ENCODE measurements at regions of chr1 and their contacts with region 1.

Region 1: DNA sequence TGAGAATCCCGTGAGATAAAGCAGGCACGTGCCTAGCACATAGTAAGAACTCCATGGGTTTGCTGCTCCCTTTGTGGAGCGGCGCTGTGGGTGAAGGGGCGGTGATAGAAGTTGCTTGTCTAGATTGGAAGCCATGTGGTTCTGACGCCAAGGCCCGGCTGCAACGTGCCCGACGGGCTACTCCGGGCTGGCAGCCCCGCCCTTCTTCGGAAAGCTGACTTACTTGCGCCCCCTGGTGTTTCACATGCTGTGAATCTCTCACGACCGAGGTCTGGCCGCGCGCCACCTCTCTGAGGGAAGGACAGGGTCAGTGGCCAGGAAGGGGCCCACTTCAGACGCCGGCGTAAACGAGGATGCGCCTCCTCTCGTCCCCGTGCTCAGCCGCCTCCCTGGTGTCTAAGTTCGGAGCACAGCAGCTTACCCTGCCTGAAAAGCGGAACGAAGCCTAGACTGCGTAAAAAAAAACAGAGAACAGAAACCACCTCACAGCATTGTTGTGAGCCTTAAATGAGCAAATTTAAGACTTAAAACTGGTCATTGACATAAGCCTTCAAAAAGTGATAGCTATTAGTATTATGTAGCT is 42.6 kb upstream of the WNT2B start:
- DNase-seq: peak; percentile 91 to 97 (median 94)
- H3K4me3 ChIP-seq: peak overlapping the region; percentile 31 to 75 (median 58)
- H3K27ac ChIP-seq: peak overlapping the region; percentile 3 to 93 (median 78)
- H3K27me3 ChIP-seq: no peaks in the 10 kb centered on the region
- CTCF ChIP-seq: peak; percentile 66 to 97 (median 93)

Region 2: GRCh38 chr1:112390775-112391602 is 75.2 kb before region 1 on chr1:
- intact Hi-C with region 1: loop called (anchors 1 kb)
- DNase-seq: peak; percentile 67 to 93 (median 88)
- H3K4me3 ChIP-seq: peak overlapping the region; percentile 24 to 70 (median 53)
- H3K27ac ChIP-seq: peak overlapping the region in 57 of 59 donors; percentile 7 to 93 (median 75)
- H3K27me3 ChIP-seq: no peaks in the 10 kb centered on the region
- CTCF ChIP-seq: peak; percentile 69 to 99 (median 94)

Region 3: GRCh38 chr1:112395821-112396652 is 70.1 kb before region 1 on chr1 and contains the start of gene CTTNBP2NL:
- intact Hi-C with region 1: loop called in 1 of 2 experiments (anchors 1 kb)
- DNase-seq: peak; percentile 92 to 98 (median 98)
- H3K4me3 ChIP-seq: peak within 1 kb of the TSS; percentile 72 to 100 (median 95)
- H3K27ac ChIP-seq: peak within 1 kb of the TSS; percentile 3 to 98 (median 88)
- H3K27me3 ChIP-seq: no peaks in the 10 kb centered on the region
- CTCF ChIP-seq: peak in 36 of 56 donors; percentile 9 to 61 (median 32)
- total RNA-seq, gene CTTNBP2NL: 24.0 to 48.1 (median 32.7) TPM

Region 4: DNA sequence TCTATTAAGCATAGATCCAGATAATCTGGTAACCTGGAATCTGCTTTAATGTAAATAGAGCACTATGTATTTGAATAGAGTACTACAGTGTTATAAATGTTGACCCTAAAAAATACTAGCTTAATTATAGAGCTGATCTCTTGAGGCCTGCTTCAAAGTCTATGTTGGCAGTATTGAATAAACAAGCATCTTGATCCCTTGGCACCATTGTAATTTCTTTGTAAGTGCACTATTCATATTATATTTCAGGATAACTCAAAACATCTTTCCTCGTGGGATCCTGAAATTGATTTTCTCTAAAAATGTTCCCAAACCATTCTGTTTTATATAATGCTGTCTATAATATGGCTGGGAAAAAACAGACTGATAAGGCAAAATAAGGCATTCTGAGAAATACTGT is 59.4 kb before region 1 on chr1:
- intact Hi-C with region 1: no loop called
- DNase-seq: no peak
- H3K4me3 ChIP-seq: no peak overlapping the region
- H3K27ac ChIP-seq: no peak overlapping the region
- H3K27me3 ChIP-seq: no peaks in the 10 kb centered on the region
- CTCF ChIP-seq: no peak

Region 5: DNA sequence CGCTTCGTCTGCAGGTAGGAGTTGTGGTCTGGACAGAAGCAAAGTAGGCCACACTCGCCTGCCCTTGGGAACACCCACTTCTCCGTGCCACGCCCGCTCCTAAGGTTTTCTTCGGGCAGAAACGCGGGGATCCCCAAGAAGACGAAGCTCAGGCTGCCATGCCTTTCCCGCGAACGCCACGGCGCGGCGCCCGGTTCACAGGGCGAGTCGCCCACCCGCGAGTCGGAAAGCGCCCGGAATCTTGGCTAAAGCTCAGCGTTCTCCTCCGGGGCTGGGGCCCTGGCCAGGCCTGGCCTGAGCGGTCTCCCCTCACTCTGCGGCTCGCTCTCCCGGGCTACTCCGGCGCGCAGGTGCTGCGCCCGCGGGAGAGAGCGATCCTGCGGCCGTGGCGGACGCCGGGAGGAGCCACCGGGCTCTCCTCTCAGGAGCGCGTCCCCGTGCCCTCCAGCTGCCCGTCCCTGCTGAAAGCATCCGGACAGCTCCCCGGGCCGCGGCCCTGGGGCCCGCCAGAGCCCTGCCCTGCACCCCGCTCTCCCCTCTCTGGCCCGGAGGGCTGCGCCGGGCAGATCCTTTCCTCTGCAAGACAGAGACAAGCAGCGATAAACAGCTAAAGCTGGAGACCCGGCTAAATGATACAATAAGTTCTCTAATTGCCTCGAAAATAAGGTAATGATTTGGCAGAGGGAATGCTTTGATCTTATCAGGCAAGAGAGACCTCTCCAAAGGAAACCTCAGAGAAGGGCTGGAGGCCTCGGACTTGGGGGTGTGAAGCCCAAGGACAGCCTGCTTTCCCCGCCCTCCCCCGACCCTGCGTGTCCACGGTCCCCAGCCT is 35.9 kb after region 1 on chr1:
- intact Hi-C with region 1: loop called in 1 of 2 experiments (anchors 5 kb)
- DNase-seq: peak; percentile 60 to 86 (median 80)
- H3K4me3 ChIP-seq: peak overlapping the region; percentile 47 to 87 (median 72)
- H3K27ac ChIP-seq: peak overlapping the region in 44 of 59 donors; percentile 3 to 87 (median 62)
- H3K27me3 ChIP-seq: no peaks in the 10 kb centered on the region
- CTCF ChIP-seq: peak in 55 of 56 donors; percentile 45 to 81 (median 68)

Measured in dorsolateral prefrontal cortex (tissue), 120 donors.